Mammary epithelial cell (primary cell): ENCODE measurements at regions of chr21 and their contacts with region 1.

Region 1: GRCh38 chr21:34693192-34693810 is 24.5 kb downstream of the CLIC6 start:
- DNase-seq: peak; percentile 39
- H3K4me3 ChIP-seq: no peak overlapping the region
- H3K27ac ChIP-seq: no peak overlapping the region
- H3K4me1 ChIP-seq: peaks cover 6% of the 10 kb centered on the region
- H3K27me3 ChIP-seq: no peaks in the 10 kb centered on the region
- CTCF ChIP-seq: peak; percentile 83 to 92

Region 2: GRCh38 chr21:34603002-34603709 is 90.1 kb before region 1 on chr21:
- CTCF ChIA-PET with region 1: no interaction called
- dilution Hi-C with region 1: no loop called
- in situ Hi-C with region 1: no loop called
- intact Hi-C with region 1: no loop called
- DNase-seq: peak; percentile 57
- H3K4me3 ChIP-seq: no peak overlapping the region
- H3K27ac ChIP-seq: no peak overlapping the region
- H3K4me1 ChIP-seq: peaks cover 8% of the 10 kb centered on the region
- H3K27me3 ChIP-seq: no peaks in the 10 kb centered on the region
- CTCF ChIP-seq: peak; percentile 73 to 81

Region 3: GRCh38 chr21:34788879-34789278 is 95.6 kb after region 1 on chr21:
- CTCF ChIA-PET with region 1: no interaction called
- dilution Hi-C with region 1: no loop called
- in situ Hi-C with region 1: no loop called
- intact Hi-C with region 1: loop called (anchors 5 kb)
- DNase-seq: no peak
- H3K4me3 ChIP-seq: no peak overlapping the region
- H3K27ac ChIP-seq: no peak overlapping the region
- H3K4me1 ChIP-seq: no peaks in the 10 kb centered on the region
- H3K27me3 ChIP-seq: no peaks in the 10 kb centered on the region
- CTCF ChIP-seq: no peak

Region 4: DNA sequence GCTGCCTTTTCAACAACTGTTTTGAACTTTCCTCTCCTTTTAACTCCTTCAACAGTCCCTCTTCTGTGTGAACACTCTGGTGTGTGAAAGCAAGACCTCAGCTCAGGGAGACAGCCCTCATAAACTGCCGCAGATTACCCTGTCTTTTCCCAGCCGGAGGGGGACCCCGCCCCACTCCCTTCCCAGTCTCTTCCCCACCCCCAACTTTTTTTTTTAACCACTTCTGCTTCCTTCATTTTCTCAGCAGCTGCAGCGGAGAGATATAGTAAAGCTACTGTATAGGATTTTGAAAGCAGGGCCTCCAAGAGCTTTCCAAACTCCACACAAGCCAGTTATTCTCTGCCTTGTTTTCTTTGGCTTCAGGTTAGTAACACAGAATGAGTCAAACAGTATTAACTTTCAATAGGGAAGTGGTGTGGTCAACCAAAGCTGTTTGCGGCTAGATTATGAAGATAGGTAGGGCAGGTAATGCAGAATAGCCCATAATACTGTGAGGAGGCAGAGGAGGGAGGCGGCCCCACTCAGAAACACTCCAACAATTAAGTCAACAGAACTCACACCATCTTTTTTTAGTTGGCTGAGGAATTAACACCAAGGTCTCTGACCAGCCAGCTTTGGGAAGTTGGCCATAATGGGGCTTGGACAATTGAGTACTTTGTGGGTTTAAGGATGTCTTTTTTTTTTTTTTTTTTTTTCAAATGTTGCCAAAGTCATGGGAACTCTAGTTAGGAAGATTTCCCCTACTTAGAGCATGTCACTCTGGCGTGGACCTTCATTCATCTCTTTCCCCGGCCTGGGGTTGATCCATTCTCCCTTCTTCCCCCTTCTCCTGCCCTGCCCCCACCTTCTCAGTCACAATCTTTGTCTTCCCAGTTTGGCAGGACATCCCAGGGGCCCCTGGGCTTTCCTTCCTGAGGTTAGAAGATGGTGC is 152.5 kb after region 1 on chr21:
- CTCF ChIA-PET with region 1: no interaction called
- dilution Hi-C with region 1: no loop called
- in situ Hi-C with region 1: loop called in 1 of 2 experiments (anchors 25 kb)
- intact Hi-C with region 1: no loop called
- DNase-seq: peak; percentile 95
- H3K4me3 ChIP-seq: no peak overlapping the region
- H3K27ac ChIP-seq: peak overlapping the region; percentile 74
- H3K4me1 ChIP-seq: peaks cover 47% of the 10 kb centered on the region
- H3K27me3 ChIP-seq: no peaks in the 10 kb centered on the region
- CTCF ChIP-seq: no peak

Region 5: DNA sequence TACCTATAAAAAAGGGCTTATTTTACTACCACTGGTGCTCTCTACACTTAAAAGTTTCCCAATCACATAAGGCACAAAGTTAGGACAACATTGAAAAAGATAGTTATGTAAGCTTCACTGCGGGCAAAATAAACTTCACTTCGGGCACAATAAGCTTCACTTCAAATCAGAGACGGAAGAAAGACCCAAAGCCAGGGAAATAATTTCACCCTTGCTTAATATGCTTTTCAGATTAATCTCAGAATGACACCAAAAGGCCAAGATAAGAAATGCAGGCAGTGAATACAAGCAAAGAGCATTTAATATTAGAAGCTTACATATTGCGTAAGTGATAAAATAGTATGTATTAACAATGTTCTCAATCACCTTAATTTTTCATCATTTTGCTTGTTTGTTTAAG is 922.8 kb after region 1 on chr21:
- CTCF ChIA-PET with region 1: no interaction called
- dilution Hi-C with region 1: no loop called
- in situ Hi-C with region 1: no loop called
- intact Hi-C with region 1: loop called (anchors 2 kb)
- DNase-seq: peak; percentile 40
- H3K4me3 ChIP-seq: no peak overlapping the region
- H3K27ac ChIP-seq: peak overlapping the region; percentile 25
- H3K4me1 ChIP-seq: peaks cover 54% of the 10 kb centered on the region
- H3K27me3 ChIP-seq: no peaks in the 10 kb centered on the region
- CTCF ChIP-seq: peak; percentile 50 to 59

Region 6: GRCh38 chr21:36028127-36029069 is 1335.1 kb after region 1 on chr21:
- CTCF ChIA-PET with region 1: no interaction called
- dilution Hi-C with region 1: no loop called
- in situ Hi-C with region 1: no loop called
- intact Hi-C with region 1: loop called (anchors 1 kb)
- DNase-seq: peak; percentile 70
- H3K4me3 ChIP-seq: no peak overlapping the region
- H3K27ac ChIP-seq: no peak overlapping the region
- H3K4me1 ChIP-seq: peaks cover 11% of the 10 kb centered on the region
- H3K27me3 ChIP-seq: no peaks in the 10 kb centered on the region
- CTCF ChIP-seq: peak; percentile 96 to 97